ENCODE measurements at regions of chr2 and their contacts with region 1.

Region 1: GRCh38 chr2:112645310-112646101 is at the start of gene SLC20A1:
- DNase-seq: peak; percentile 93
- H3K4me3 Mint-ChIP-seq: peak within 1 kb of the TSS; percentile 77
- H3K27ac Mint-ChIP-seq: peak within 1 kb of the TSS; percentile 94
- H3K4me1 Mint-ChIP-seq: peaks cover 48% of the 10 kb centered on the region
- H3K27me3 Mint-ChIP-seq: no peaks in the 10 kb centered on the region
- CTCF ChIP-seq: peak; percentile 37
- total RNA-seq, gene SLC20A1: 242 and 295 TPM in 2 replicates

Region 2: DNA sequence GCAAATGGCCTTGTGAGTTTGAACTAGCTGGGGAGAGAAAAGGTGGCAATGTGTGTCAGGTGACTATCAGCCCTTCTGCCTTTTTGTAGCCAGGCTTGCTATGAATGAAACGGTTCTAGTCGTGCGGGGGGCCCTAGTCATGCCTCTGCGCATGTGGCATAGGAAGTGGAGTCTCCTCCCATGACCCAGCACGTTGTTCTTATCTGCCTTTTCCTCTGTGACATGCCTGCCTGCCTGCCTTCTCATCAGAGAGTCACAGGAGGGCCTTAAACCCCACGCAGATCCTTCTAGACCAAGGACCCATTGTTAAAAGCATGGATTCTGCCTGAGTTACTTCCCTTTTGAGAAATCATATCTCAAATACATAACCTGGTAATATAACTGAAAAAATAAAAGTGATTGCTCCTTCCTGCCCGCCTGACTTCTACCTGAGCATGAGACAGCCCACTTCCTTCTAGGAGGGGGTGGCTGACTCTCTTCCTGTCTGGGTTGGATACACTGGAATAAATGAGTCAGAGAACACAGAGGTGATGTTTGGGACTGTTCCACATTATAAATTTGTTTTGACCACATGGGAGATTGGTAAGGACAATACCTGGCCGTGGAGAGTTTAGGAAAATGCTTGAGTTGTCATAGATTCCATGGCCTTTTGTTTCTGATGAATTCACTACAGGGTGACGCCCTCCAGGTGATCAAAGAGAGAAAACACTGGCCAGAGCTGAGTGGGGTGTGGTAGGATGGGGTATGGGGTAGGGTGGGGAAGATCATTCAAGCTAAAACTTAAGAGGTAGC is 457.5 kb before region 1 on chr2:
- CTCF ChIA-PET with region 1: no interaction called
- POLR2A ChIA-PET with region 1: no interaction called
- intact Hi-C with region 1: no loop called
- DNase-seq: peak; percentile 37
- H3K4me3 Mint-ChIP-seq: no peak overlapping the region
- H3K27ac Mint-ChIP-seq: peak overlapping the region; percentile 24
- H3K4me1 Mint-ChIP-seq: peaks cover 10% of the 10 kb centered on the region
- H3K27me3 Mint-ChIP-seq: no peaks in the 10 kb centered on the region
- CTCF ChIP-seq: no peak

Region 3: GRCh38 chr2:112332123-112332696 is 313.3 kb before region 1 on chr2:
- CTCF ChIA-PET with region 1: no interaction called
- POLR2A ChIA-PET with region 1: no interaction called
- intact Hi-C with region 1: no loop called
- DNase-seq: no peak
- H3K4me3 Mint-ChIP-seq: no peak overlapping the region
- H3K27ac Mint-ChIP-seq: no peak overlapping the region
- H3K4me1 Mint-ChIP-seq: no peaks in the 10 kb centered on the region
- H3K27me3 Mint-ChIP-seq: no peaks in the 10 kb centered on the region
- CTCF ChIP-seq: no peak

Region 4: GRCh38 chr2:112529757-112530156 is 115.7 kb before region 1 on chr2:
- CTCF ChIA-PET with region 1: no interaction called
- POLR2A ChIA-PET with region 1: no interaction called
- intact Hi-C with region 1: no loop called
- DNase-seq: no peak
- H3K4me3 Mint-ChIP-seq: no peak overlapping the region
- H3K27ac Mint-ChIP-seq: no peak overlapping the region
- H3K4me1 Mint-ChIP-seq: no peaks in the 10 kb centered on the region
- H3K27me3 Mint-ChIP-seq: no peaks in the 10 kb centered on the region
- CTCF ChIP-seq: no peak

Region 5: GRCh38 chr2:112584134-112584890 is 61.2 kb before region 1 on chr2 and contains the start of gene CHCHD5:
- CTCF ChIA-PET with region 1: interaction called, 4 read pairs
- POLR2A ChIA-PET with region 1: interaction called, 31 read pairs
- intact Hi-C with region 1: no loop called
- DNase-seq: peak; percentile 98
- H3K4me3 Mint-ChIP-seq: peak within 1 kb of the TSS; percentile 92
- H3K27ac Mint-ChIP-seq: peak within 1 kb of the TSS; percentile 100
- H3K4me1 Mint-ChIP-seq: peaks cover 24% of the 10 kb centered on the region
- H3K27me3 Mint-ChIP-seq: no peaks in the 10 kb centered on the region
- CTCF ChIP-seq: no peak
- total RNA-seq, gene CHCHD5: 54.5 and 56.1 TPM in 2 replicates

Region 6: DNA sequence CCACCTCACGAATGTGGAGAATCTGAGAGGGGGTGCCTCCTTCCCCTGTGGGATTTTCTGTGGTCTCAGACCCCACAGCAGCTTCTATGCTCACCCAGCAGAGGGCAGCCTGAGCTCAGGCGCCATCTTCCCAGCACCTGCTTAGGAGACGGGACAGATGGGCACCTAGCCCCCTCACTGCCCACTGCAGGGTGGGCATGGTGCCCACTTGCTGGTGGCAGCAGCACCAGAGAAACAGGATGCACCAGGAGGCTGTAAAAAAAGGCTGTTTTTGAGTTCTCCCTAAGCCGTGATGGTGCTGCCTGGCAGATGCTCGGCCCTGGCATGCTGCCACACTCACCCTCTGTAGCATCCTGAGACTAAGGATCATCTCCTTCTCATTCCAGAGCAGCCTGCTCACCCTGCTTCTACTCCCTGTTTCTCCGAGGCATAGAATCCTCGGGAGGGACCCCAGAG is 18.9 kb before region 1 on chr2:
- CTCF ChIA-PET with region 1: interaction called, 107 read pairs
- POLR2A ChIA-PET with region 1: interaction called, 570 read pairs
- intact Hi-C with region 1: loop called (anchors 1 kb)
- DNase-seq: peak; percentile 73
- H3K4me3 Mint-ChIP-seq: peak overlapping the region; percentile 58
- H3K27ac Mint-ChIP-seq: peak overlapping the region; percentile 93
- H3K4me1 Mint-ChIP-seq: peaks cover 58% of the 10 kb centered on the region
- H3K27me3 Mint-ChIP-seq: no peaks in the 10 kb centered on the region
- CTCF ChIP-seq: peak; percentile 85

Region 7: DNA sequence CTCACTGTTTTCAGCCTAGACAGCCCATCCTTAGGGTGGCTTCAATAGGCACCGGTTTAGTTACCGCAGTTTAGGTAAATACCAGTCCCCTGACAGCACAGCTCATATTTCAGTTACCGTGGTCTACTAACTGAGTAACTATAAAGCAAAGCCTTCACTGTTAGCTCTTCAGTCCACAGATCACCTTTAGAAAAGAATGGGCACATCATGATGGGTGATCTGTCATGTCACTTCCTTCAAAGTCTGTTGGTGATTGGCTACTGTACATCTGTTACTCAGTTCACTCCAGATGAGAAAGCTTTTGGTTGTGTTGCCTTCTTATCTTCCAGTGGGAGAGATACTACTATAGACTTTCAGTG is 21.2 kb after region 1 on chr2:
- CTCF ChIA-PET with region 1: interaction called, 3 read pairs
- POLR2A ChIA-PET with region 1: interaction called, 77 read pairs
- intact Hi-C with region 1: no loop called
- DNase-seq: no peak
- H3K4me3 Mint-ChIP-seq: no peak overlapping the region
- H3K27ac Mint-ChIP-seq: no peak overlapping the region
- H3K4me1 Mint-ChIP-seq: no peaks in the 10 kb centered on the region
- H3K27me3 Mint-ChIP-seq: no peaks in the 10 kb centered on the region
- CTCF ChIP-seq: no peak

Region 8: GRCh38 chr2:112692496-112692911 is 47.0 kb after region 1 on chr2:
- CTCF ChIA-PET with region 1: interaction called, 10 read pairs
- POLR2A ChIA-PET with region 1: interaction called, 66 read pairs
- intact Hi-C with region 1: loop called (anchors 5 kb)
- DNase-seq: peak; percentile 98
- H3K4me3 Mint-ChIP-seq: peak overlapping the region; percentile 7
- H3K27ac Mint-ChIP-seq: peak overlapping the region; percentile 86
- H3K4me1 Mint-ChIP-seq: peaks cover 22% of the 10 kb centered on the region
- H3K27me3 Mint-ChIP-seq: no peaks in the 10 kb centered on the region
- CTCF ChIP-seq: no peak

Measured in MCF 10A (cell line).